Activated naive CD4-positive, alpha-beta T cell treated with anti-CD3 and anti-CD28 coated beads, Interleukin-2, amount 10 ng/mL, durations not matched to agents 7 days and 5 days (primary cell): ENCODE measurements at regions of chr20 and their contacts with region 1.

Region 1: DNA sequence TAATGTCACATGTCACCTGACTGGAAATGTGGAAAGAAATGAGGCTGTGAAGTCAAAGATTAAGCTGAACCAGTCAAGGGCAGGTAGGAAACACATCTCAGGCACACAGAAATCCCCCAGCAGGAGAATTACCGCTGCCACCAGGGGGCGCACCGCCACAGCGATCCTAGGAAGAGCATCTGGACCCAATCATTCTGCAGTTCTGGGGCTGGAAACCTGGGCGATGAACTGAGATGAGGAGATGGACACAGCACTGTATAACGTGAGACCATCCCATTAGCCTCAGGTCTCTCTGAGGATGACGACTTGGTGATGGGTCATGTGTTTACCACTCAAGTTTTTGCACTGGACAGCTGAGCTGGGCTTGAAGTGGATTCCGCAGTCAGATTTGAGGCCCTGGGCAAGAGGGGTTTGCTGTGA is 6.5 kb upstream of the SLC24A3 start:
- DNase-seq: peak; percentile 71
- H3K4me3 Mint-ChIP-seq: no peak overlapping the region
- H3K27ac Mint-ChIP-seq: no peak overlapping the region
- H3K4me1 Mint-ChIP-seq: no peaks in the 10 kb centered on the region
- H3K27me3 Mint-ChIP-seq: peaks cover 19% of the 10 kb centered on the region

Region 2: GRCh38 chr20:19583532-19584175 is 377.7 kb after region 1 on chr20:
- CTCF ChIA-PET with region 1: interaction called, 53 read pairs
- DNase-seq: peak; percentile 56
- H3K4me3 Mint-ChIP-seq: no peak overlapping the region
- H3K27ac Mint-ChIP-seq: no peak overlapping the region
- H3K4me1 Mint-ChIP-seq: no peaks in the 10 kb centered on the region
- H3K27me3 Mint-ChIP-seq: no peaks in the 10 kb centered on the region

Region 3: DNA sequence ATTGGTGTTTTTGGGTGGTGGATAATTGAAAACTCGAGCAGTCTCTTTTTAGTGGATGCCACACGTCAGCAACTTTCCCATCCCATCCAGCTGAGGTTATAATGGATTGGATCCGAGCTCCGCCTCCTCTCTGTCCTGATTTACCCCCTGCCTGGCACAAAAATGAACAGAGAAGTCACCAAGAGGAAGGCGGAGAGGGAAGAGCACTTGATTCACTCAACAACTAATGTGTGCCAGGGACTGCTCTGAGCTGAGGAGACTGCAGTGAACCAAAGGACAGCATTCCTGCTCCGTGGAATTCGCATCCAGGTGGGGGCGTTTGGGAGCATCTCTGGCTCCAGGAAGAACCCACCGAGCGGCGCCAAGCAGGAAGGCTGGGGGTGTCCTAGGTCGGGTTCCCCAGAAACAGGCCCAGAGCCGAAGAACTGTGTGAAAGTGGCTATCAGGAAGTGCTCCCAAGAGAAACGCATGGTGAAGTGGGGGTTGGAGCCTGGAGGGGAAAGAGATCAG is 715.4 kb after region 1 on chr20:
- CTCF ChIA-PET with region 1: no interaction called
- DNase-seq: no peak
- H3K4me3 Mint-ChIP-seq: no peak overlapping the region
- H3K27ac Mint-ChIP-seq: no peak overlapping the region
- H3K4me1 Mint-ChIP-seq: no peaks in the 10 kb centered on the region
- H3K27me3 Mint-ChIP-seq: no peaks in the 10 kb centered on the region